Esophagus muscularis mucosa (tissue), 4 donors: ENCODE measurements at regions of chr3 and their contacts with region 1.

Region 1: DNA sequence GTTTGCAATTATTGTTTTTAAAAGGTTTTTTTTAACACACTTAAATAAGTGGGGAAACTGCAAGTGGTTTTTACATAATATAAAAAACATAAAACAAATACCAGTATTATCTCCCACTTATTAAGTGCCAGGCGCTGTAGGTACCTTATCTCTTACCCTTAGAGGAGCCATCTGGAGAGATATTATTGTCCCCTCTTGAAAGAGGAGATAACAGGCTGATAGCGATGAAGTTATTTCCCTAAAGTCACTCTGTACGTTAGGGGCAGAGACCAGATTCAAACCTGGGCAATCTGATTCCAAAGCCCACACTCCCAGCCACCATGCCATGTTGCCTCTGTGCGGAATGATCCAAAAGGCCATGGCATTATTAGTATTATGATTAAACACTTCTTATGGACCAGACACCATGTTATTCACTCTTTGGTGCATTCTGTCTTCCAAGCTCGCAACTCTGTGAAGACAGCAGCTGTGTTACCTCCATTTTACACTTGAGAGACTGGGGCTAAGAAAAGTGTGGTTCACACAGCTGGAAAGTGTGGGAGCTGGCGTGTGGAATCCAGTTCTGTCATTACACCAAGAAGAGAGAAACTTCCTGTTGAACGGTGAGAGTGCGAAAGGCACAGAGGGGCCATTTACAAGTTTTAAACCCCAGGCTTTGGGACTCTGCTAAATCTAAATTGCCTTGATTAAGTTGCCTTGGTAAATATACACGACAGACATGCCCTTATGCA is 79.9 kb upstream of the MITF start:
- DNase-seq: no peak
- H3K4me3 ChIP-seq: no peak overlapping the region
- H3K27ac ChIP-seq: no peak overlapping the region
- H3K4me1 ChIP-seq: peaks cover 0 to 5% (median 3%) of the 10 kb centered on the region in 4 donors
- H3K27me3 ChIP-seq: no peaks in the 10 kb centered on the region
- CTCF ChIP-seq: no peak
- EP300 ChIP-seq: no peak
- POLR2A ChIP-seq: no peak

Region 2: GRCh38 chr3:69433969-69434325 is 225.4 kb before region 1 on chr3:
- intact Hi-C with region 1: loop called (anchors 5 kb)
- DNase-seq: no peak
- H3K4me3 ChIP-seq: no peak overlapping the region
- H3K27ac ChIP-seq: no peak overlapping the region
- H3K4me1 ChIP-seq: peaks cover 0 to 24% (median 8%) of the 10 kb centered on the region in 4 donors
- H3K27me3 ChIP-seq: no peaks in the 10 kb centered on the region
- CTCF ChIP-seq: no peak
- EP300 ChIP-seq: no peak
- POLR2A ChIP-seq: no peak